Activated CD4-positive, alpha-beta T cell treated with anti-CD3 and anti-CD28 coated beads for 36 hours (primary cell): ENCODE measurements at regions of chr21 and their contacts with region 1.

Region 1: DNA sequence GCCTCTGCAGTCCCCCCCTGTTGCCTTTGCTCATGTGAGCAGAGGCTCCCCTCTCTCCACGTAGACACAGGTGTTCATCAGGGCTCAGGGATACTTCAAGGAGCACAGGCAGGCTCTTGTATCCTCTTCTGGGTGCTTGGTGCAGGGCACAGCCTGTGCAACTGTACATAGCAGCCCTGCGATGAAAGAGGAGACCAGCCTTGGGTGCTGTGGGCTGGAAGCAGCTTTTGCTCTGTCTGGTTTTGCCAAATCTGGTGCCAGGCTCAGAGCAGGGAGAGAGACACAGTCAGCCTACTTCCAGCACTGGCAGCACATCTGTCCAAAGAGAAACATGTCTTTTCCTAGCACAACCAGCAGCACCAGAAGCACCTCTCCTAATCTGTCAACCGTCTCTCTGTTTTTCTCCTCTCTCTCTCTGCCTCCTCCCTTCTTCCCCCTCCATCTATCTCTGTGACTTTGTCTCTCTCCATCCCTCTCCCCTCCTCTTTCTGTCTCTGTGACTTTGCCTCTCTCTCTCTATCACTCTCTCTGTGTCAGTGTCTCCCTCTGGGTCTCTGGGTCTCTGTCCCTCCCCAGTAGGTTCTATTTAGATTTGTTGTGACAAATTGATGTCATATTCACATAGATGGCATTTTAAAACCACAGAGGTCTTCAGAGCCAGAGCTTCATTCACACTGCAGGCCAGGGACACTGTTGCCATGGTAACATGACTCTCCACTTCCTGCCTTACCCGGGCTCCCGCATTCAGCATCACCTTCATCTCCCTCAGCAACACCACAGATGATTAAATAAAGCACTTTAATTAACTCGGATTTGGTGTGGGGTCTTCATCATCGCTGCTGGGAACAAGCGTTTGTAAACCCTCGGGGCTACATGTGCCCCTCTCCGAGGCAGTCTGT is 132.4 kb downstream of the ETS2 start:
- DNase-seq: peak; percentile 59
- ATAC-seq: peak; percentile 93
- H3K4me3 Mint-ChIP-seq: no peak overlapping the region
- H3K27ac Mint-ChIP-seq: peak overlapping the region; percentile 29
- H3K4me1 Mint-ChIP-seq: peaks cover 14% of the 10 kb centered on the region
- H3K27me3 Mint-ChIP-seq: no peaks in the 10 kb centered on the region

Region 2: GRCh38 chr21:38985568-38986378 is 47.7 kb after region 1 on chr21:
- CTCF ChIA-PET with region 1: no interaction called
- POLR2A ChIA-PET with region 1: no interaction called
- intact Hi-C with region 1: loop called in 1 of 2 experiments (anchors 1 kb)
- DNase-seq: peak; percentile 85
- ATAC-seq: peak; percentile 84
- H3K4me3 Mint-ChIP-seq: peak overlapping the region; percentile 51
- H3K27ac Mint-ChIP-seq: peak overlapping the region; percentile 85
- H3K4me1 Mint-ChIP-seq: peaks cover 21% of the 10 kb centered on the region
- H3K27me3 Mint-ChIP-seq: peaks cover 60% of the 10 kb centered on the region

Region 3: GRCh38 chr21:39022863-39023693 is 85.0 kb after region 1 on chr21:
- CTCF ChIA-PET with region 1: no interaction called
- POLR2A ChIA-PET with region 1: no interaction called
- intact Hi-C with region 1: no loop called
- DNase-seq: no peak
- ATAC-seq: no peak
- H3K4me3 Mint-ChIP-seq: no peak overlapping the region
- H3K27ac Mint-ChIP-seq: no peak overlapping the region
- H3K4me1 Mint-ChIP-seq: no peaks in the 10 kb centered on the region
- H3K27me3 Mint-ChIP-seq: peaks cover 4% of the 10 kb centered on the region

Region 4: GRCh38 chr21:39938086-39938625 is 1000.1 kb after region 1 on chr21:
- CTCF ChIA-PET with region 1: no interaction called
- POLR2A ChIA-PET with region 1: no interaction called
- intact Hi-C with region 1: no loop called
- DNase-seq: no peak
- ATAC-seq: no peak
- H3K4me3 Mint-ChIP-seq: no peak overlapping the region
- H3K27ac Mint-ChIP-seq: no peak overlapping the region
- H3K4me1 Mint-ChIP-seq: no peaks in the 10 kb centered on the region
- H3K27me3 Mint-ChIP-seq: no peaks in the 10 kb centered on the region